K562 (cell line): ENCODE measurements at regions of chr11 and their contacts with region 1.

Region 1: GRCh38 chr11:78290293-78291176 is 101.8 kb downstream of the USP35 start:
- DNase-seq: peak; percentile 42 to 83 (median 52)
- ATAC-seq: peak; percentile 84
- H3K4me3 ChIP-seq: no peak overlapping the region
- H3K27ac ChIP-seq: peak overlapping the region; percentile 65
- H3K4me1 ChIP-seq: peaks cover 18 to 70% of the 10 kb centered on the region in 2 experiments
- H3K27me3 ChIP-seq: no peaks in the 10 kb centered on the region
- CTCF ChIP-seq: no peak
- EP300 ChIP-seq: peak; percentile 100
- POLR2A ChIP-seq: no peak
- RAD21 ChIP-seq: peak in 1 of 2 experiments; percentile 59

Region 2: DNA sequence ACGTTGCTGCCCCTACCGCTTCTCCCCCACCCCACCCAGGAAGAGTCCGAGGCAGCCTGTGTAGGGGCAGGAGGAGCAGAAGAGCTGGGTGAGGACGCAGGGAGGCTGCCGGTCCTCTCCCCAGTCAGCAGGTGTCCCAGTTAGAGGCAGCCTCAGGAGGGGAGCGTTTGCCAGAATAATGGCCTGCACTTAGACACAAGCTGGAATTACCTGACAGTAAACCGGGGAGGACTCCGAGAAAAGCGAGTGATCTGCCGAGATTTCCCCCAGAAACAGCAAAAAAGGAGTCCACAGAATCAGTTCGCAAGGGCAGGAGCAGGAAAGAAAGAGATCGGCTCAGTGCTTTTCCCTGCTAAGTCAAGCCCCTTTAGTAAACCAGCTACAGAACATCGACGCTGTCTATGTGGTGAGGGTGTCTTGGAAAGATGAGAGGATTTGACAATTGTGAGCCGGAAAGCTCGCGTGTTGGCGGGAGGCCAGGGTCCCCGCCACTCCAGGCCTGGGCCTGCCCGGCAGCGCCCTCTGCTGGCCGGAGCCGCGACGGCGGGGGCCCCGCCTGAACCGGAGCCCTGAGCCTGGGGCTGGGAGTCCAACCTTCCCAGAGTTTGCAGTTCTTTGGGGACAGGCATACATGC is 244.6 kb before region 1 on chr11:
- CTCF ChIA-PET with region 1: no interaction called
- POLR2A ChIA-PET with region 1: no interaction called
- in situ Hi-C with region 1: no loop called
- intact Hi-C with region 1: no loop called
- DNase-seq: peak; percentile 85 to 94 (median 91)
- ATAC-seq: peak; percentile 86
- H3K4me3 ChIP-seq: no peak overlapping the region
- H3K27ac ChIP-seq: no peak overlapping the region
- H3K4me1 ChIP-seq: peaks cover 28 to 29% of the 10 kb centered on the region in 2 experiments
- H3K27me3 ChIP-seq: no peaks in the 10 kb centered on the region; a peak in 1 of 5 replicates
- CTCF ChIP-seq: peak; percentile 94 to 99 (median 94)
- EP300 ChIP-seq: no peak
- POLR2A ChIP-seq: no peak
- RAD21 ChIP-seq: peak; percentile 87 to 96

Region 3: GRCh38 chr11:78079232-78080083 is 211.1 kb before region 1 on chr11 and contains the start of gene NDUFC2:
- CTCF ChIA-PET with region 1: no interaction called
- POLR2A ChIA-PET with region 1: no interaction called
- in situ Hi-C with region 1: no loop called
- intact Hi-C with region 1: loop called (anchors 10 kb)
- DNase-seq: peak; percentile 79 to 92 (median 80)
- ATAC-seq: peak; percentile 83
- H3K4me3 ChIP-seq: peak within 1 kb of the TSS; percentile 92
- H3K27ac ChIP-seq: peak within 1 kb of the TSS; percentile 90
- H3K4me1 ChIP-seq: peaks cover 23 to 35% of the 10 kb centered on the region in 2 experiments
- H3K27me3 ChIP-seq: no peaks in the 10 kb centered on the region
- CTCF ChIP-seq: 0 out of 6 replicates have a peak, but pooled peaks of 1 of the 3 experiments have one; percentile 1
- EP300 ChIP-seq: peak; percentile 74
- POLR2A ChIP-seq: peak; percentile 91
- RAD21 ChIP-seq: 0 out of 4 replicates have a peak, but pooled peaks of 1 of the 2 experiments have one; percentile 8
- polyA plus RNA-seq, gene NDUFC2: 987 to 1,119 TPM

Region 4: DNA sequence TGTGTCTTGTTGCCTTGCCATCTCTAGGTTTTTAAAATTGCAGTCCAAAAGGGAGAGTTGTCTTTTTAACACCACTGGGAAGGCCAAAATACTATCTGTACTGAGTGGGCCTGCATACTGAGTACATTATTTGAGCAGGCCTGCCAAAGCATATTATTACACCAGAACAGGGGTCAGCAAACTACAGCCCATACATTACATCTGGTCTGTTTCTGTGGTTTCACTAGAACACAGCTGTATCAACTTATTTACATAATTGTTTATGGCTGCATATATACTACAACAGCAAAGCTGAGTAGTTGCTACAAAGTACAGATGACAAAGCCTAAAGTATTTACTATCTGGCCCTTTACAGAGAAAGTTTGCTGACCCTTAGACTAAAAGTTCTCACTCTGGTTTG is 27.8 kb before region 1 on chr11:
- CTCF ChIA-PET with region 1: no interaction called
- POLR2A ChIA-PET with region 1: interaction called, 8 read pairs
- in situ Hi-C with region 1: no loop called
- intact Hi-C with region 1: loop called (anchors 1 kb)
- DNase-seq: no peak
- ATAC-seq: peak; percentile 5; the same call in 1 of the 3 replicates
- H3K4me3 ChIP-seq: no peak overlapping the region
- H3K27ac ChIP-seq: peak overlapping the region; percentile 14; the same call in 1 of the 3 replicates
- H3K4me1 ChIP-seq: peaks cover 13 to 49% of the 10 kb centered on the region in 2 experiments
- H3K27me3 ChIP-seq: no peaks in the 10 kb centered on the region
- CTCF ChIP-seq: no peak
- EP300 ChIP-seq: no peak
- POLR2A ChIP-seq: no peak
- RAD21 ChIP-seq: no peak

Region 5: GRCh38 chr11:78318321-78319114 is 28.0 kb after region 1 on chr11:
- CTCF ChIA-PET with region 1: no interaction called
- POLR2A ChIA-PET with region 1: interaction called, 3 read pairs
- in situ Hi-C with region 1: no loop called
- intact Hi-C with region 1: loop called (anchors 2 kb)
- DNase-seq: no peak
- ATAC-seq: peak; percentile 40
- H3K4me3 ChIP-seq: no peak overlapping the region
- H3K27ac ChIP-seq: peak overlapping the region; percentile 64
- H3K4me1 ChIP-seq: peaks cover 12 to 43% of the 10 kb centered on the region in 2 experiments
- H3K27me3 ChIP-seq: no peaks in the 10 kb centered on the region
- CTCF ChIP-seq: no peak
- EP300 ChIP-seq: no peak
- POLR2A ChIP-seq: no peak
- RAD21 ChIP-seq: no peak

Region 6: DNA sequence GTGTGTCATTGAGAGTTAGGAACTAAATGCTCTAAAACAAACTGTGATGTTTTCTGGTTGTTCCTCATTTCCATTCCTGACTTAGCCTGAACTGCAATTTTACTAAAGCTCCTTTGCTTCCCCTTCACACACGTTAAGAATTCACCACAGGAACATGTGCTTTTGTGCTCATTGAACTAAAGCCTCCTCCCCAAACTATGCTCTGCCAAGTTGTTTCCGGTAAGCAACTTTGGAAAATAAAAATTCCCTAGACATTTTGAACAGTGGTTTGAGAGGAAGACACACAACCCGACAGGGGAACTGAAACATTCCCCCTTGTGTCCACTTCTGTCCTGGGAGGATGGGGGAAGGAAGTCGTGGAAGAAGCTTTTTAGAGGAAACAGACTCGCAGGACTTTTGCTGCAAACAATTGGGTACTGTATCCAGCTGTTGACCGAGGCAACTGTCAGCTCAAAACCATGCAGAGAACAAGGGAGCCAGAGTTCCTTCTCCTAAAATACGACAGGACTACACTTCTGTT is 60.2 kb after region 1 on chr11:
- CTCF ChIA-PET with region 1: no interaction called
- POLR2A ChIA-PET with region 1: interaction called, 3 read pairs
- in situ Hi-C with region 1: no loop called
- intact Hi-C with region 1: loop called (anchors 1 kb)
- DNase-seq: peak in 1 of 4 experiments; percentile 40
- ATAC-seq: peak; percentile 9
- H3K4me3 ChIP-seq: peak overlapping the region; percentile 21; the same call in 1 of the 2 replicates
- H3K27ac ChIP-seq: peak overlapping the region; percentile 84
- H3K4me1 ChIP-seq: peaks cover 12 to 82% of the 10 kb centered on the region in 2 experiments
- H3K27me3 ChIP-seq: no peaks in the 10 kb centered on the region
- CTCF ChIP-seq: no peak
- EP300 ChIP-seq: no peak
- POLR2A ChIP-seq: no peak
- RAD21 ChIP-seq: 0 out of 4 replicates have a peak, but pooled peaks of 1 of the 2 experiments have one; percentile 6

Region 7: DNA sequence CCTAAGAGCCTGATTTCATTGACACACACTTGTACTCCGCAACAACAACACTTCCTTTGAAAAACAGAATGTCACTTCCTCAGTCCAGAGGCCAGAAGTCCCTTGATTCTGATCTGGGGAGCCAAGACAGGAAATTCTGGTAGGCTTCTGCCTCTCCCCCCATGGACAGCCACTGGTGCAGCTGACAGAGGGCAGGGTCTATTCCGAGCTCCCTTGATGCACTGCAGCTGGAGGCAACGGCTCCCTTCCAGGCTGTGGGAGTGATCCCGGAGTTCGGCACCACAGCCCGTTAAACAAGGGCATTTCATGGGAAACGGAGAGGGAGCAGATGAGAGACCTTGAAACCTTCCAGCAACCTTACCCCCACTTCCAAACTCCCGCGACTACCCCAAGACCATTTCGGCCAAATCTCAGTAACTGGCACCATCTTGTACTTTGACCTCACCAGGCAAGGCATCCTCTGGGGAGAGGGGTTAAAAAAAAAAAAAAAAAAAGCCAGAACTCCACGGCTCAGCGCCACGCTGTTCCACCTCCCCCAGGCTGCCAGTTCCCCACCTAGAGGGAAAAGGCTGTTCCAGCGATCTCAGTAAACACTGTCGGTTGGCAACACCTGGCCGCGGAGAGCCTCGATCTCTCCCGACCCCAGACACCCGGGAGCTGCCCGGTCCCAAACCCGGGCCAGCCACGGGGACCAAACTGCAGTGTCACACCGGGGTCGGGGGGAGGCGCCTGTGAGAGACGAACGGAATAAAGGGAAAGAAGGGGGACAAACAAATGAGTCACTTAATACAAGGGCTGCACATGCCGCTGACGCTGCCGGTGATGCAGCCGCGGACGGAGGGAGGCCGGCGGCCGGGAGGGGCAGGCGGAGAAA is 126.0 kb after region 1 on chr11:
- CTCF ChIA-PET with region 1: no interaction called
- POLR2A ChIA-PET with region 1: interaction called, 4 read pairs
- in situ Hi-C with region 1: no loop called
- intact Hi-C with region 1: loop called (anchors 1 kb)
- DNase-seq: peak; percentile 80 to 91 (median 82)
- ATAC-seq: peak; percentile 74
- H3K4me3 ChIP-seq: peak overlapping the region; percentile 69
- H3K27ac ChIP-seq: peak overlapping the region; percentile 89
- H3K4me1 ChIP-seq: peaks cover 23 to 41% of the 10 kb centered on the region in 2 experiments
- H3K27me3 ChIP-seq: no peaks in the 10 kb centered on the region
- CTCF ChIP-seq: peak; percentile 50 to 68 (median 63)
- EP300 ChIP-seq: peak; percentile 54; the same call in 1 of the 2 replicates
- POLR2A ChIP-seq: peak; percentile 76
- RAD21 ChIP-seq: peak in 1 of 2 experiments; percentile 45; a peak in 3 of 4 replicates

Region 8: DNA sequence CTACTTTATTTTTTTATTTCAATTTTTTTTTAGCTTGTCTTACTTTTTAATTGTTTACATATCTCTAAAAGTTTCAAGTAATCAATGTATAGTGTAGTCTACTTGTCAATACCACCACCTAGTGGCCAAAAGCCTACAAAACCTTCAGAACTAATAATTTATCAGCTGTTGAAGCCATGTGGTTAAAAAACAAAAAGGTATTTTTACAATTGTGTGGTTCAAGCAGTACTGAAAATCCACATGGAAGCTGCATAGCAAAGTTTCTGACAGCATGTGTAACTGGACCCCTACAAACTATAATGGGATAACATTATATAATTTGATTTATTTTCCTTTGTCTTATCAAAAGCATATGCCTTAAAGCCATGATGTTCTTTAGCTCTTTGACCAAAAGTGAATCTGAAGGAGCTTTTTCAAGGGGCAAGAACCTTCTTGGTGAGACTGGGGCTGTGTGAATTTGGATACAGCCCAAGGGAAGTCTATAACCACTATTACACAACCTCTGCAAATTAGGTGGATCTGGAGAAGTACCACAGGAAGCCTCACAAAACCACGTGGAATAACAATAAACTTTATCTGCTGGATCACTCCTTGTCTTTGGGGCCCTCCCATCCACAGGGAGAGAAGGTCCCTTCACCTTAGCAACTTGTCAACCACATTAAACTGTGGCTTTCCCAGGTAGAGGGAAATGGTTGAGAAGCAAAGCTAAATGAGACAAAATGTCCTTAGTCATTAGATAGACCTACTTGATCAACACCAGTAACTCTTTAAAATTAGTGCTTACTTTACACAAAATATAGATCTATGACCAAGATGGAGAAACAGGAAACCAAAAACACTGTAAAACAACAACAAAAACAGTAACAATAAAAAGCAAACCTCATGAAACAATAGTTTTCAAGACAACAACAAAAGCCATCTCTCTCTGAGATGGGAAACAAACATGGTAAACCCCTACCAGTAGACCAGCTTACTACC is 274.2 kb after region 1 on chr11:
- CTCF ChIA-PET with region 1: no interaction called
- POLR2A ChIA-PET with region 1: no interaction called
- in situ Hi-C with region 1: no loop called
- intact Hi-C with region 1: loop called (anchors 10 kb)
- DNase-seq: peak; percentile 33 to 73 (median 38)
- ATAC-seq: peak; percentile 88
- H3K4me3 ChIP-seq: no peak overlapping the region
- H3K27ac ChIP-seq: peak overlapping the region; percentile 23; the same call in 1 of the 3 replicates
- H3K4me1 ChIP-seq: peaks cover 0 to 3% of the 10 kb centered on the region in 2 experiments; a peak in 1 of 5 replicates
- H3K27me3 ChIP-seq: no peaks in the 10 kb centered on the region
- CTCF ChIP-seq: peak; percentile 40 to 83 (median 53); a peak in 4 of 6 replicates
- EP300 ChIP-seq: no peak
- POLR2A ChIP-seq: no peak
- RAD21 ChIP-seq: peak; percentile 78 to 87